Endothelial cell of umbilical vein (primary cell): ENCODE measurements at regions of chr1 and their contacts with region 1.

Region 1: GRCh38 chr1:45512641-45513054 is 9.0 kb downstream of the PRDX1 start:
- DNase-seq: peak; percentile 74
- H3K4me3 ChIP-seq: no peak overlapping the region
- H3K27ac ChIP-seq: no peak overlapping the region
- H3K4me1 ChIP-seq: no peaks in the 10 kb centered on the region
- H3K27me3 ChIP-seq: no peaks in the 10 kb centered on the region
- CTCF ChIP-seq: peak; percentile 66 to 81
- POLR2A ChIP-seq: no peak

Region 2: GRCh38 chr1:44994309-44994898 is 518.2 kb before region 1 on chr1:
- CTCF ChIA-PET with region 1: no interaction called
- POLR2A ChIA-PET with region 1: no interaction called
- dilution Hi-C with region 1: no loop called
- intact Hi-C with region 1: no loop called
- DNase-seq: no peak
- H3K4me3 ChIP-seq: no peak overlapping the region
- H3K27ac ChIP-seq: no peak overlapping the region
- H3K4me1 ChIP-seq: no peaks in the 10 kb centered on the region
- H3K27me3 ChIP-seq: no peaks in the 10 kb centered on the region
- CTCF ChIP-seq: no peak
- POLR2A ChIP-seq: no peak

Region 3: DNA sequence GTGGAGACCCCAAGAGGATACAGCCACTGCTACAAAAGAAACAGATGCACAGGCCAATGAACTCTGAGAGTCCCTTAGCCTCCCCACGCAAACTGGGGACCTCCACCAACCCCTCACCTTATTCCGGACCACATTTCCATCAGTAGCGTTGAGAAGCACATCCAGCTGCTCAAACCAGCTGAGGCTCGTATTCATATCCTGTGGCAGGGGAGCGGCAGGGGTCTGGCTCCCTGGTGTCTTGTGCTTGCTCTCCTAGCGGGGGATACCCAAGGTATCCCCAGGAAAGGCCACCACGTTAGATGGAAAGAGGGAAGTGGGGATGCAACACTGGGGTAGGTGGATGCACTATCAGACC is 13.3 kb before region 1 on chr1:
- CTCF ChIA-PET with region 1: interaction called, 12 read pairs
- POLR2A ChIA-PET with region 1: interaction called, 3 read pairs
- dilution Hi-C with region 1: no loop called
- intact Hi-C with region 1: no loop called
- DNase-seq: peak; percentile 12
- H3K4me3 ChIP-seq: peak overlapping the region; percentile 23 to 80 (median 54)
- H3K27ac ChIP-seq: no peak overlapping the region
- H3K4me1 ChIP-seq: peaks cover 11% of the 10 kb centered on the region
- H3K27me3 ChIP-seq: no peaks in the 10 kb centered on the region
- CTCF ChIP-seq: no peak
- POLR2A ChIP-seq: no peak

Region 4: DNA sequence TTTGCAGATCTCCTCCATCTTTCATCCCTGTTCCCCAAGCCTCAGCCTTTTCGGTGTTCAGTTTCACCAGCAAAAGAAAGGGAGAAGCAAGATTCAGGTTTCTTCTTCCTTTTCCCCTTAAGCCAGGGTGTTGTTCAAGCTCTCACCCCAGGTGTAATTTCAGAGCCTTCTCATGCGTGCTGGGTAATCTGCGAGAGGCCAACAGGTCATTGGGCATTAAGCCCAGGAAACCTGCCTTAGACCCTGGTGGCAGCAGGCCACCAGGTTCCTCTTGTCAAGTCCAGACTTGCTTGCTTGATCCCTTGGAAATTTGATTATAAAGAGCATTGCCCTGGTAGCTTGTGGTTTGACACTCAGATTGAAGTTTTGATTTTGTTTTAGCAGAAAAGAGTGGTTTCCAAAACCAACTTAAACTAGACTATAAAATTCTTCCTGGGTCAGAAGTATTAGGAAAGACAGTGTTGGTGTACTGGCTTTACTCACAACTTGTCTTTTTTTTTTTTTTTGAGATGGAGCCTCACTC is 44.8 kb after region 1 on chr1:
- CTCF ChIA-PET with region 1: interaction called, 6 read pairs
- POLR2A ChIA-PET with region 1: interaction called, 20 read pairs
- dilution Hi-C with region 1: no loop called
- intact Hi-C with region 1: no loop called
- DNase-seq: no peak
- H3K4me3 ChIP-seq: no peak overlapping the region
- H3K27ac ChIP-seq: no peak overlapping the region
- H3K4me1 ChIP-seq: no peaks in the 10 kb centered on the region
- H3K27me3 ChIP-seq: no peaks in the 10 kb centered on the region
- CTCF ChIP-seq: no peak
- POLR2A ChIP-seq: no peak

Region 5: DNA sequence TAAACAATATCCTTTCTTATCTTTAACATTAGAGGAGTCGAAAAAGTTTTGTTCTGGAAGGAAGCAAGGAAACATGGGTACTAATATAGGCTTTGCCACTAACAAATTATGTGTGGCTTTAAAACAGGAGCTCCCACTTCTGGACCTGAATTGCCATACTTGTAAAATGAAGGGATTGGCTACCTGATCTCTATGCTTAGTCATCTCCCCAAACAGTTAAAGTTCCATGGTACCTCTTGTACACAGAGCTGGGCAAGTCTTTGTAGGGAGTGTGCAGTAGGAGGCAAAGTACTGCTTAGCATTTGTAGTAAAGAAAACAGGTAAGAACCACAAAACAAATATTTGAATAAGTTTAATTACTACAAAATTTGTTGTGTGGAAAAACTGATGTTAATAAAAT is 372.1 kb after region 1 on chr1:
- CTCF ChIA-PET with region 1: no interaction called
- POLR2A ChIA-PET with region 1: no interaction called
- dilution Hi-C with region 1: no loop called
- intact Hi-C with region 1: loop called (anchors 1 kb)
- DNase-seq: no peak
- H3K4me3 ChIP-seq: no peak overlapping the region
- H3K27ac ChIP-seq: no peak overlapping the region
- H3K4me1 ChIP-seq: no peaks in the 10 kb centered on the region
- H3K27me3 ChIP-seq: no peaks in the 10 kb centered on the region
- CTCF ChIP-seq: no peak
- POLR2A ChIP-seq: no peak